GM10248 (cell line): ENCODE measurements at regions of chr13 and their contacts with region 1.

Region 1: DNA sequence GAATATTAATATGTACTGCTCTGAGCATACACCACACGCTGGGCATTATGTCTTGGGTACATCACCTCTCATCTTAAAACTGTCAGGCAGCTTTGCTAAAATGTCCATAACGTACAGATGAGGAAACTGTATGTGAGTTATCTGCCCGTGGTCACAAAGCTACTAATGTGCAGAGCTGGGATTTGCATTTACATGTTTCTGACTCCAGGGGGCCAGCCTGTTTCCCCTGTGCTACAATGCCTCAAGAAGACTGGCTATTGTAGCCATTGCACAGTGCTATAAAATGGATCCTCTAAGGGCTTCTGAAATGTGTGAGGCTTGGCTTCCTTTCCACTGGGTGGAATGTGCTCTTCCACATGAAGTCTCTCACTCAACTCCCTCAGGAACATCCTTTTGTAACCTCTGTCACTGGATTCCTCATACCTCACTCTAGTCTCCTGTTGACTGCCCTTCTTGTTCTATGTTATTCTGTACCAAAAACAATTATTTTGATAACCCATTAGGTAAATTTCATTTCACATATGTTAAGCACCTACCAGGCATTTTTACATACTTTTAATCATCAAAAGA is 95.6 kb upstream of the HTR2A start:
- DNase-seq: no peak
- CTCF ChIP-seq: peak; percentile 21

Region 2: DNA sequence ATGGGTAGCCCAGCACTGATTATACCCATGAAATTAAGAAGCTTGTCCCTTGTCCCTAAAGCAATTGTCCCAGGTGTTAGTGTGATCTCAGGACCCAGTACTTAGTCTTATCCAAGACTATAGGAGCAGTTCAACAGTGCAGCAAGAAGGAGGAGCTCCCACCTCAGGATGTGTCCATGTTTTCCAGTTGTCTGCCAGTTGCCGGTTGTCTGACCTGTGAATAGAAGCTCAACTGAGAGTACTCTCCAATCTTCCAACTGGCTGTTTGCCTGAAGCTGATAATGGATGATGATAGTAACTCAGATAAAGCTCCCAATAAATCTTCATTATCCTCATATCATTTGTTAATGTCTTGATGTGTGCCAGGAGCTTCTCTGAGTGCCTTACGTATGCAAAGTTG is 11.6 kb after region 1 on chr13:
- CTCF ChIA-PET with region 1: interaction called, 15 read pairs
- POLR2A ChIA-PET with region 1: no interaction called
- DNase-seq: no peak
- CTCF ChIP-seq: no peak

Region 3: DNA sequence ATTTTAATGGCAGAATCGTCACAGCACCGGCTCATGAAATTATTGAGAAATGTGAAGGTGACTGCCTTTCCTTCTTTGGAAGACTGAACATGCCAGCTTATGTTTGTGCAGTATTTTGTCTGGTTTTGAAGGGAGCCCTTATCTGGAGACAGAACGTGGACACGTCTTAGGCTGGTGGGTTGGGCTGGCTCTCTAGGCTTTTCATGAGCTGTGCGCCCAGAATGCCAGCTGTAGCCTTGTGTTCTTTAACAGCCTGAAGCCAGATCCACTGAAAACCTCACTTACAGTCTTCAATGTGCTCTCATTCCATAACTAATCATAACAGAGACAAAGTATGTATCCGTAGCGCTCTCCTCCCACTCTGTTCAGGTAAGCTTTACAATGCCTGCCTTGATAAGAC is 88.8 kb after region 1 on chr13:
- CTCF ChIA-PET with region 1: no interaction called
- POLR2A ChIA-PET with region 1: no interaction called
- DNase-seq: no peak
- CTCF ChIP-seq: no peak

Region 4: GRCh38 chr13:47094734-47095434 is 102.4 kb after region 1 on chr13:
- CTCF ChIA-PET with region 1: no interaction called
- POLR2A ChIA-PET with region 1: no interaction called
- DNase-seq: peak; percentile 37
- CTCF ChIP-seq: no peak